ENCODE measurements at regions of chr2 and their contacts with region 1.

Region 1: GRCh38 chr2:177392373-177393202 is at the start of gene AGPS:
- DNase-seq: peak; percentile 56 to 73
- ATAC-seq: peak; percentile 89 to 90
- H3K4me3 ChIP-seq: peak within 1 kb of the TSS; percentile 82 to 95 (median 89)
- H3K27ac ChIP-seq: peak within 1 kb of the TSS; percentile 76 to 87 (median 82)
- H3K4me1 ChIP-seq: peaks cover 25 to 37% of the 10 kb centered on the region in 2 donors
- H3K27me3 ChIP-seq: no peaks in the 10 kb centered on the region
- CTCF ChIP-seq: peak in 4 of 5 experiments; percentile 28 to 51 (median 40)
- POLR2A ChIP-seq: peak in 1 of 2 donors; percentile 51
- total RNA-seq, gene AGPS: 23.1 to 30.9 (median 26.2) TPM

Region 2: GRCh38 chr2:177413703-177414102 is 21.1 kb after region 1 on chr2:
- in situ Hi-C with region 1: no loop called
- intact Hi-C with region 1: no loop called
- DNase-seq: no peak
- ATAC-seq: no peak
- H3K4me3 ChIP-seq: no peak overlapping the region
- H3K27ac ChIP-seq: no peak overlapping the region
- H3K4me1 ChIP-seq: peaks cover 0 to 4% of the 10 kb centered on the region in 2 donors
- H3K27me3 ChIP-seq: no peaks in the 10 kb centered on the region
- CTCF ChIP-seq: no peak
- POLR2A ChIP-seq: no peak

Region 3: GRCh38 chr2:177763532-177764265 is 371.1 kb after region 1 on chr2:
- in situ Hi-C with region 1: no loop called
- intact Hi-C with region 1: loop called (anchors 10 kb)
- DNase-seq: peak; percentile 27 to 41
- ATAC-seq: peak; percentile 65 to 85
- H3K4me3 ChIP-seq: no peak overlapping the region
- H3K27ac ChIP-seq: no peak overlapping the region
- H3K4me1 ChIP-seq: peaks cover 0 to 3% of the 10 kb centered on the region in 2 donors
- H3K27me3 ChIP-seq: no peaks in the 10 kb centered on the region
- CTCF ChIP-seq: peak in 4 of 5 experiments; percentile 58 to 84 (median 68)
- POLR2A ChIP-seq: no peak